ENCODE measurements at regions of chr6 and their contacts with region 1.

Region 1: DNA sequence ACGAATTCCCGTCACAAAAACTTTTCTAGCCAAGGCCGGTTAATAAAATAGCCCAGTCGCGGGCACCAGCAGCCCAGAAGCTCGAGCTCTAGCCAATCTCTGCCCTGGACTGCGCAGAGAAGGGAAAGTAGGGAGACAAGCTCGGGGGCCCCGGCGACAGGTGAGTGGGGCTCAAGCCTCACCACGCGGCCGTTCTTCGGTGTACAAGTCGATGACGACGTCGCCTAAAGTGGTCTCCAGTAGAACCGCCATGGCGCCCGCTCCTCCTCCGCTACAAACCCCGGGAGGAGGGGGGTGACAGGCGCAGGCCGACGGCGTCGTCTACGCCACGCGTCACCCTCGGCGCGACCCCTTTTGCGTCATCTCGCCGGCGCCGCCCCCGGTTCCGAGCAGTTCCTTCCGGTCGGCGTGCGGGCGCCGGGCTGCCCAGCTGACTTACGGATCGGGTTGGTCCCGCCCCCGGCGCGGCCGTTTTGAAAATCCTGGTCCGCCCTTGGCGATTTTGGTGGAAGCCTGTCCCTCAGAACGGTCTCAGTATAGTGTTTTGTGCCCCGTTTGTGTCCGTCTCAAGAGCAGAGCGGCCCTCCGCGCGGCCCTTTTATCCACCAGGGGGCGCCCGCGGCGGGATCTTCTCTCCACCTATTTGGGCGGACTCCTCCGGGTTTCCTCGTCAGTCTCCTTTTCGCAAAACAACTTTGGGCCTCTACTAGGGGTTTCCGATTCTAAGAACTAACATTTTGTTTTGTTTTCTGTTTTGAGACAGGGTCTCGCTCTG is at the start of gene PPIL4:
- DNase-seq: peak; percentile 92 to 99 (median 95)

Region 2: DNA sequence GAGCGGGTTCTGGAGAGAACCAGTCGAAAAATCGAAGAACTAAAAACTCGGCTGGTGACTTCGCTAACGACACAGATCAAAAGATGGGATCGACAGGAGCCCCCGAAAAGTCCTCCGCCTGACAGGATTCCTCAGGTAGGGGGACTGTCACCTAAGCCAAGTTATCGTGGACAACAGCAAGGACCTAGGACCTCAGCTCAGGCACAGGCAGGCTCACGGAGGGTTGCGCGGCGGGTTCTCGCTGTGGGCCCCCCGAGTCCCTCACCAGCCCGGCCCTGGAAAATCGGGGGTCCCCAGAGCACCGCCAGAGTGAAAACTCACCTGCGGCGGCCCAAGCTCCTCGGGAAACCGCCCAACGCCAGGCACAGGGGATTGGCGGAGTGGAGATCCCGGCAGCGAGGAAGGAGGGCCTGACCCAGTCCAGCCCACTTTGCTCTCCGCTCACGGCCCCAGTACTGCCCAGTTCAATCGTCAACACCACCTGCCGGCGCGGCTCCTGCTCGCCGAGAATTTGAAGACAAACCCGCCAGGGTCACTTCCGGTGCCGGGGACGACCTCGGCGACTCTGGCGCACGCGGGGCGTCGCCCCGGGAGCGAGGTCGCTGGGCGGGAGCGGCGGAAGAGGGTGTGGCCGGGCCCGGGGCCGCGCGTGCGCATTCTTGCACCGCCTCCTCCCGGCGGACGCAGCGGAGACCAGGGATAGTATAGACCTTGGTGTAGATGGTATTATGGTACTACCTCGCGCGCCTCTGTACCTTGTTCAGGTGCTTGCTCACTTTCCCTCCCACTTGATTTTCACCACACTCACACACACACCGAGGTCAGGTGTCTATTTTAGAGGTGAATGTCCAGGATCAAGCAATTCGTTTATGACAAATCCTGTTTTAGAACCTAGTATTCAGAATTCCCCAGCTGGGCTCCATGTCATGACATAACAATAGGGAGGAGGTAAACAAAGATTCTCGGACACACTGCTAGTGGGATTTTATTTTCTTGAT is 102.5 kb after region 1 on chr6 and contains the start of gene KATNA1:
- intact Hi-C with region 1: loop called (anchors 5 kb)
- DNase-seq: peak; percentile 72 to 98 (median 84)

Region 3: DNA sequence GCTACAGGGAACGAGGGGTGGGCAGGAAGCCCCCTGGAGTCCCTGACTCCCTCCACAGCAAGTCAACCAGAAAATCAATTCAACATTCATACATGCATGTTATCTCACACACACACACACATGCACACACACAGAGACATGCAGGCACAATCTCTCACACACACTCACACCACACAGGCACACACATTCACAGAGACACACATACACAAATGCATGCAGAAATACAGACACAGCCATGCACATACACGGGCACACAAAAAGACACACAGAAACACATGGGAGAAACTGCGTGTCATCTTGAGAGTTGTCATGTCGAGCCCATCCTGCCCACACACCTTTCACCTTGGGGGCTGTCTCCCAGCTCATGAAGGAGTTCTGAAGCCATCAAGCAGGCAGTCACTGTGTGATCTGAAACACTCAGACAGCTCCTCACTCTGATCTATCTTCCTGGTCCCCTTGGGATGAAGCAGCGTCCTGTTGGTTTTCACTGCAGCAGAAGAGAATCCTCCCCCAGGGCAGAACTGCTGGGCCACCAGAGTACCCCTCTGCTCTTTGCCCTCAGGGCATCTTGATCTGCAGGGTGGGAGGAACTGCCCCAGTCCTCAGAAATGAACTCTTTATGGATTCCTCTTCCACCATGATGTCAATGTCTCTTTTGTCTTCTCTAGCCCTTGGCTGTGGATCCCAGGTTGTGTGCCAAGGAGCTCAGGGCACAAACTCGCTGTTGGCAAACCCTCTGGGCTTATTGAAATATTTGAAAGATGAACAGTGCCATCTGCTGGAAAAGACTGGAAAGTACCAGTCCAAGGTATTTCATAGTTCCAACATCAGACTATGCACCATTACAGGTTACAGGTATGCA is 470.6 kb after region 1 on chr6:
- intact Hi-C with region 1: loop called (anchors 10 kb)
- DNase-seq: peak in 7 of 10 donors; percentile 48 to 93 (median 62)